CD8-positive, alpha-beta T cell (primary cell): ENCODE measurements at regions of chr1 and their contacts with region 1.

Region 1: GRCh38 chr1:212284744-212285684 is at the start of gene PPP2R5A:
- DNase-seq: peak; percentile 96 to 100 (median 98)
- ATAC-seq: peak; percentile 85
- H3K4me3 ChIP-seq: peak within 1 kb of the TSS; percentile 89 to 95
- H3K4me3 Mint-ChIP-seq: peak within 1 kb of the TSS; percentile 96
- H3K27ac ChIP-seq: peak within 1 kb of the TSS; percentile 95 to 96
- H3K27ac Mint-ChIP-seq: peak within 1 kb of the TSS; percentile 99
- H3K4me1 ChIP-seq: peaks cover 32% of the 10 kb centered on the region
- H3K4me1 Mint-ChIP-seq: peaks cover 43% of the 10 kb centered on the region
- H3K27me3 ChIP-seq: no peaks in the 10 kb centered on the region
- H3K27me3 Mint-ChIP-seq: no peaks in the 10 kb centered on the region
- CTCF ChIP-seq: no peak
- total RNA-seq, gene PPP2R5A: 57.8 to 60.5 TPM

Region 2: DNA sequence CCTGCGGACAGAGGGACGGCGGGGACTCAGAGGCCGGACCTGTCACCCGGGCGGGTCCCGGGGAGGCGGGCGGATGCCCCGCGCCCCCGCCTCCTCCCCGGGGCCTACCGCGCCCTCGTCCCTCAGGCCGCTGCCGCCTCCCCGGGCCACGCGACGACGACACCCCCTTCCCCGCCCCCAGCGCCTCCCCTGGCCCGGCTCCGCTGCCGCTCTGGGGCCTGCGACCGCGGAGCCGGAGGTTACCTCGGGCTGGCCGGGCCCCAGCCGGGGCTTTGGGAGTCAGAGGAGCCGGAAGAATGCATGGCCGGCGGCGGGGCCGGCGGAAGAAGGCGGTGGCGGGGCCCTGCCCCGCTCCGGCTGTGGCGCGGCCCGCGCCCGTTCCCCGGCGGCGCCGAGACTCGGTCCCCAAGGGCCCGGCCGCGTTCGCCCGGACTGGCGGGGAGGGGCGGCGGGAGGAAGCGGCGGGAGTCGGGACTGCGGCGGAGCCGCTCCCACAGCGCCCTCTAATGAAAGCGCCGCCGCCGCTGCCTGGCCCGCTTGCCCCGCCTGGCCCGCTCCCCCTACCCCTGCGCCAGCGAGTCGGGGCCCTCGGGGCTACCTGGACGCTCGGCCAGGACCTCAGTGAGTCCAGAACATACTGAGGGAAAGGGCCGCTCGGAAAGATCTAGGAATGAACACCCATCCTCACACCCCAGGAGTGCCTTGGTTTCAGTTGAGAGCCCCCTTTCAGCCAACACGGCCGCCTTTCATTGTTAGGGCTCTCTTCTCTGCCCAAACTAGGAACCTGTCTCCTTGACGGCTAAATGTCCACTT is 454.5 kb before region 1 on chr1 and contains the start of gene LPGAT1:
- CTCF ChIA-PET with region 1: no interaction called
- POLR2A ChIA-PET with region 1: no interaction called
- intact Hi-C with region 1: loop called in 1 of 2 experiments (anchors 10 kb)
- DNase-seq: peak; percentile 37 to 84 (median 71)
- ATAC-seq: peak; percentile 79
- H3K4me3 ChIP-seq: peak within 1 kb of the TSS; percentile 69 to 75
- H3K4me3 Mint-ChIP-seq: peak within 1 kb of the TSS; percentile 90
- H3K27ac ChIP-seq: peak within 1 kb of the TSS; percentile 50 to 78
- H3K27ac Mint-ChIP-seq: peak within 1 kb of the TSS; percentile 92
- H3K4me1 ChIP-seq: peaks cover 44% of the 10 kb centered on the region
- H3K4me1 Mint-ChIP-seq: peaks cover 64% of the 10 kb centered on the region
- H3K27me3 ChIP-seq: no peaks in the 10 kb centered on the region
- H3K27me3 Mint-ChIP-seq: no peaks in the 10 kb centered on the region
- CTCF ChIP-seq: peak; percentile 51
- total RNA-seq, gene LPGAT1: 17.9 to 19.1 TPM

Region 3: DNA sequence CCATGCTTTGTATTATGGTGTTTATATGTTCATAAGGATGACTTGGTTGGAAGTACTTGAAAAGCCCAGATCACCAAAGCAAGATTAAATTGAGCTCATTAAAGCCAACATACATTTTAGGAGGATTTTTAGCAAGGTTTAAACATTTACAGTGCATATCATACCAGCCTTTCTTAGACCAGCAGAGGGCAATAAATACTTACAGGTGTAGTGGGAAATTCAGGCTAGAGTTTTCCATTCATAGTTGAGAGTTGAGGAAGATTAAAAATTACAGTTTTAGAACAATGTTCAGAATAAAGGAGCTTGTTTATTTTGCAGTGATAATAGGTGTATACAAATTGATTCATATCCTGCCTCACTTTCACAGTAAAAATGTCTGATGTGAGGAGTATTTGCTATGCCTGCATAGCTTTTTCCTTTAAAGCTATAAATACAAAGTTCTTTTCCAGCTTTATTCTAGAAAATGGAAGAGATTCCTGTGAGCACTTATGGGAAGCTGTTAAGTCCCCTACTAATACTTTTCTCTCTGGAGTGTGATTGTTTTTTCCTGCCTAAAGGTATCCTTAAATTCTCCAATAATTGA is 214.2 kb before region 1 on chr1:
- CTCF ChIA-PET with region 1: interaction called, 67 read pairs
- POLR2A ChIA-PET with region 1: interaction called, 11 read pairs
- intact Hi-C with region 1: no loop called
- DNase-seq: peak in 2 of 9 experiments; percentile 60 to 72
- ATAC-seq: peak; percentile 68
- H3K4me3 ChIP-seq: no peak overlapping the region
- H3K4me3 Mint-ChIP-seq: no peak overlapping the region
- H3K27ac ChIP-seq: no peak overlapping the region
- H3K27ac Mint-ChIP-seq: no peak overlapping the region
- H3K4me1 ChIP-seq: no peaks in the 10 kb centered on the region
- H3K4me1 Mint-ChIP-seq: no peaks in the 10 kb centered on the region
- H3K27me3 ChIP-seq: no peaks in the 10 kb centered on the region
- H3K27me3 Mint-ChIP-seq: no peaks in the 10 kb centered on the region
- CTCF ChIP-seq: peak; percentile 71

Region 4: GRCh38 chr1:212256369-212256768 is 28.6 kb before region 1 on chr1:
- CTCF ChIA-PET with region 1: interaction called, 3 read pairs
- POLR2A ChIA-PET with region 1: interaction called, 25 read pairs
- intact Hi-C with region 1: loop called in 1 of 2 experiments (anchors 1 kb)
- DNase-seq: peak in 7 of 9 experiments; percentile 16 to 82 (median 51)
- ATAC-seq: peak; percentile 74
- H3K4me3 ChIP-seq: peak overlapping the region in 1 of 2 experiments; percentile 6
- H3K4me3 Mint-ChIP-seq: peak overlapping the region; percentile 57
- H3K27ac ChIP-seq: peak overlapping the region in 1 of 2 experiments; percentile 78
- H3K27ac Mint-ChIP-seq: peak overlapping the region; percentile 82
- H3K4me1 ChIP-seq: peaks cover 55% of the 10 kb centered on the region
- H3K4me1 Mint-ChIP-seq: peaks cover 69% of the 10 kb centered on the region
- H3K27me3 ChIP-seq: no peaks in the 10 kb centered on the region
- H3K27me3 Mint-ChIP-seq: no peaks in the 10 kb centered on the region
- CTCF ChIP-seq: no peak

Region 5: GRCh38 chr1:212414328-212415106 is 129.5 kb after region 1 on chr1 and contains the start of gene PACC1:
- CTCF ChIA-PET with region 1: interaction called, 3 read pairs
- POLR2A ChIA-PET with region 1: interaction called, 6 read pairs
- intact Hi-C with region 1: loop called (anchors 1 to 2 kb)
- DNase-seq: peak; percentile 73 to 95 (median 86)
- ATAC-seq: peak; percentile 91
- H3K4me3 ChIP-seq: peak within 1 kb of the TSS; percentile 80 to 98
- H3K4me3 Mint-ChIP-seq: peak within 1 kb of the TSS; percentile 97
- H3K27ac ChIP-seq: peak within 1 kb of the TSS; percentile 59 to 67
- H3K27ac Mint-ChIP-seq: peak within 1 kb of the TSS; percentile 92
- H3K4me1 ChIP-seq: peaks cover 25% of the 10 kb centered on the region
- H3K4me1 Mint-ChIP-seq: peaks cover 40% of the 10 kb centered on the region
- H3K27me3 ChIP-seq: no peaks in the 10 kb centered on the region
- H3K27me3 Mint-ChIP-seq: no peaks in the 10 kb centered on the region
- CTCF ChIP-seq: no peak
- total RNA-seq, gene PACC1: 2.6 to 2.9 TPM

Region 6: DNA sequence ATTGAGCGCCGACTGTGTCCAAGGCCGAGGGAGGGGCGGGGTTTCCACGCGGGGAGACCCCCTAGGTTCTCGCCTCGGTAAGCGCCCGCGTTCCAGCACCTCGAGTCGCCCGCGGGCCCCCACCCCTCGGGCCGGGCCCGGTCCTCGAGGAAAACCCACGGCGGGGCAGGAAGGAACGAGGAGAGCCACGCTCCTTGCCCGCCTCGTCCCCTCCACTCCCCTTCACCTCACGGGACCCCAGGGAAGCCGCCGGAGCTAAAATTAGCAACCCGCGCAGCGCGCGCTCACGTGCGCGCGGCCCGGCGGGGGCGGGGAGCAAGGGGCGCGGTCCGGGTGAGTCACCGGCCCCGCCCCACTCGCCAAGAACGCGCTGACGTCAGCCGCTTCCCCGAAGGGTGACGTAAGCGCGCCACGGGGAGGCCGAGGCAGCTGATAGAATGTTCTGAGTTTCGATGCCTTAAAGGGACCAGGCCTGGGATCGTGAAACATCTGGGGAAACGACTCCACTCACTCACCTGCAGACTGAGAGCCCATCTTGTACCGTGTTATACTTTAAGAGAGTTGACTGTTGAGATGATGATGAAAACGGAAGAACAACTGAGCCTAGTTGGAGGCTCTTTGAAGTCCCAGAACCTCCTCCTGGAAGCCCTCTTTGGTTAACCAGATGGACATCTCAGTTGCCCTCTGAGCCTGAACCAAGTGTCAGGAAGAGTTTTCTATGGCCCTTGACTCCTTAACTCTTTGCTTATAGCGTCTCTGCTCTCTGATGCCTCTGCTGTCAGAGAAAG is 273.9 kb after region 1 on chr1:
- CTCF ChIA-PET with region 1: no interaction called
- POLR2A ChIA-PET with region 1: no interaction called
- intact Hi-C with region 1: loop called in 1 of 2 experiments (anchors 5 kb)
- DNase-seq: peak; percentile 83 to 97 (median 92)
- ATAC-seq: peak; percentile 96
- H3K4me3 ChIP-seq: peak overlapping the region; percentile 45 to 82
- H3K4me3 Mint-ChIP-seq: peak overlapping the region; percentile 85
- H3K27ac ChIP-seq: peak overlapping the region; percentile 76 to 95
- H3K27ac Mint-ChIP-seq: peak overlapping the region; percentile 94
- H3K4me1 ChIP-seq: peaks cover 5% of the 10 kb centered on the region
- H3K4me1 Mint-ChIP-seq: peaks cover 10% of the 10 kb centered on the region
- H3K27me3 ChIP-seq: peaks cover 0 to 3% of the 10 kb centered on the region in 2 experiments
- H3K27me3 Mint-ChIP-seq: no peaks in the 10 kb centered on the region
- CTCF ChIP-seq: no peak

Region 7: DNA sequence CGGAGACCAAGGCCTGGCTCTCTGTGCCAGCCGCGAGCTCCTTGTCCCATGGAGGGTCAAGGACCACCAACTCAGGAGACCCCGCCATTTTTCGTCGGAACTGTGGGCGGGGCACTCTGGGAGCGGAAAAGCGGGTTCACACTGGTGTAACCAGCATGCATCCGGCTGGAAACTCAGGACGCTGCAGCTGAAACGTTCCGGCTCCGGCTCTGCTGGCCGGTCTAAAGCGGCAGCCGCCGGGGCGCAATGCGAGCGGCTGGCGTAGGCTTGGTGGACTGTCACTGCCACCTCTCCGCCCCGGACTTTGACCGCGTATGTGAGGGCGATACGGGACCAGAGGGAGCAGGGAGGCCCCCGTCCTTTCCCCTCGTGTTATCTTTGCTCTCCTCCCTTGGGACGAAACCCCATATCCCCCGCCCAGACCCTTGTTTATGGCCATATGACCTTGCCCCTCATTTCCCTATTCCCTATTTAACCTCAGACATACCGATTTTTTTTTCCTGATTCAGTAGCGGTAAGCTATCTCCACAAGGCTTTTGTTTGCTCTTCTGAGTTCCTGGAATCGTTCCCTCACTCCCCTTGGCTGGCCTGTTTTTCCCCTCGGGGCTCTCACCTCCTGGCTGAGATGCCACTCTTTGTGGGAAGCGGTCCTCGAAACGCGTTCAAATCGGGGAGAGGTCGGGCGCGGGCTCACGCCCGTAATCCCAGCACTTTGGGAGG is 506.8 kb after region 1 on chr1 and contains the starts of genes NSL1 and TATDN3:
- CTCF ChIA-PET with region 1: no interaction called
- POLR2A ChIA-PET with region 1: interaction called, 3 read pairs
- intact Hi-C with region 1: loop called (anchors 1 to 10 kb)
- DNase-seq: peak; percentile 87 to 98 (median 95)
- ATAC-seq: peak; percentile 93
- H3K4me3 ChIP-seq: peak within 1 kb of the TSS; percentile 93 to 96
- H3K4me3 Mint-ChIP-seq: peak within 1 kb of the TSS; percentile 97
- H3K27ac ChIP-seq: peak within 1 kb of the TSS; percentile 79 to 87
- H3K27ac Mint-ChIP-seq: peak within 1 kb of the TSS; percentile 96
- H3K4me1 ChIP-seq: peaks cover 22% of the 10 kb centered on the region
- H3K4me1 Mint-ChIP-seq: peaks cover 37% of the 10 kb centered on the region
- H3K27me3 ChIP-seq: no peaks in the 10 kb centered on the region
- H3K27me3 Mint-ChIP-seq: no peaks in the 10 kb centered on the region
- CTCF ChIP-seq: no peak
- total RNA-seq, gene NSL1: 13.0 to 19.0 TPM
- total RNA-seq, gene TATDN3: 10.7 to 11.6 TPM